Activated naive CD4-positive, alpha-beta T cell treated with anti-CD3 and anti-CD28 coated beads for 36 hours (primary cell): ENCODE measurements at regions of chr2 and their contacts with region 1.

Region 1: GRCh38 chr2:108621087-108621559 is 86.9 kb downstream of the LIMS1 start:
- DNase-seq: peak; percentile 86
- H3K4me3 Mint-ChIP-seq: peak overlapping the region; percentile 84
- H3K27ac Mint-ChIP-seq: peak overlapping the region; percentile 92
- H3K4me1 Mint-ChIP-seq: peaks cover 80% of the 10 kb centered on the region
- H3K27me3 Mint-ChIP-seq: no peaks in the 10 kb centered on the region

Region 2: DNA sequence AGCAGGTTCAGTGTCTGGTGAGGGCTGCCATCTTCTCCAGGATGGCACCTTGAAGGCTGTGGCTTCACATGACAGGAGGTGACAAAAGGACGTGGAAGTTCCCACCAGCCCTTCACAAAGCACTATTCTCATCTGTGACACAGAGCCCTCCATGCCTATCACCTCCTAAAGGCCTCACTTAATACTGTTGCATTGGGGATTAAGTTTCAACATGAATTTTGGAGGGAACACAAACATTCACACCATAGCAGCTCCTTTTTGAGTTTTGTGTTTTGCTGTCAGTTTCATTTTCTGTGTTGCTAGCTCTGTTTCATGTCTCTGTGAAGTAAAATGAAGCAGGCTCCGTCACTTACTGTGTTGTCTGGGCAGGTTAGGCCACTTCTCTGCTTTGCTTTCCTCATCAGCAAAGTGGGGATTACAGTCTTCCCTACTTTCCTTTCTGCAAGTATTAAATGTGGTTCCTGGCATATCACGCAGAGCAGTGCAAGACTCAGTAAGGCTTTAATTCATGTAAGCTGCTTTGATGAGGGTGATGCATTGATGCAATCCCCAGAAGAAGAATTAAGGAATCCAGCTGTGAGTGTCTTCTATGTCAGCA is 55.2 kb before region 1 on chr2:
- CTCF ChIA-PET with region 1: no interaction called
- intact Hi-C with region 1: no loop called
- DNase-seq: peak; percentile 52
- H3K4me3 Mint-ChIP-seq: peak overlapping the region; percentile 5
- H3K27ac Mint-ChIP-seq: peak overlapping the region; percentile 15
- H3K4me1 Mint-ChIP-seq: peaks cover 8% of the 10 kb centered on the region
- H3K27me3 Mint-ChIP-seq: no peaks in the 10 kb centered on the region

Region 3: GRCh38 chr2:108594132-108594981 is 26.8 kb before region 1 on chr2:
- CTCF ChIA-PET with region 1: interaction called, 4 read pairs
- intact Hi-C with region 1: loop called (anchors 1 kb)
- DNase-seq: peak; percentile 30
- H3K4me3 Mint-ChIP-seq: peak overlapping the region; percentile 17
- H3K27ac Mint-ChIP-seq: no peak overlapping the region
- H3K4me1 Mint-ChIP-seq: peaks cover 49% of the 10 kb centered on the region
- H3K27me3 Mint-ChIP-seq: no peaks in the 10 kb centered on the region

Region 4: DNA sequence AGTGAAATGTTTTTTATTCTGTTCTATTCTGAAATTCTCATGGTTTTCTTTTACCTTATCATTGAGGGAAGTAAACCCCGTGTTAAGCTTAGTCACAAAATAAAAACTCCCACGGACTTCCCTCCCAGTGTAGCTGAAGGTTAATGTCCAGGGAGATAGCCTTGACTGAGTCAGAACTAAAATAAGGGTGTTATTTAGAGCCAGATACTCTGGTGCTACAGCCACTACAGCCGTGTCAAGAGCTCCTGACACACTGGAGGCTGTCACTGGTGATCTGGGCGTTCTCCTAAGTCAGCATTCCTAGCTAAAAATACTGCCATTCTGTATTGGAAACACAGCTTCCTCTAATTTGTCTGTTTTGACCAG is 16.2 kb after region 1 on chr2:
- CTCF ChIA-PET with region 1: interaction called, 147 read pairs
- intact Hi-C with region 1: no loop called
- DNase-seq: no peak
- H3K4me3 Mint-ChIP-seq: no peak overlapping the region
- H3K27ac Mint-ChIP-seq: no peak overlapping the region
- H3K4me1 Mint-ChIP-seq: peaks cover 54% of the 10 kb centered on the region
- H3K27me3 Mint-ChIP-seq: no peaks in the 10 kb centered on the region

Region 5: GRCh38 chr2:108786354-108787199 is 165.5 kb after region 1 on chr2 and contains the start of gene CCDC138:
- CTCF ChIA-PET with region 1: no interaction called
- intact Hi-C with region 1: loop called (anchors 5 kb)
- DNase-seq: peak; percentile 92
- H3K4me3 Mint-ChIP-seq: peak within 1 kb of the TSS; percentile 97
- H3K27ac Mint-ChIP-seq: peak within 1 kb of the TSS; percentile 87
- H3K4me1 Mint-ChIP-seq: peaks cover 14% of the 10 kb centered on the region
- H3K27me3 Mint-ChIP-seq: no peaks in the 10 kb centered on the region
- total RNA-seq, gene CCDC138: 7.4 to 9.5 TPM

Region 6: GRCh38 chr2:108971661-108972566 is 350.8 kb after region 1 on chr2:
- CTCF ChIA-PET with region 1: no interaction called
- intact Hi-C with region 1: no loop called
- DNase-seq: no peak
- H3K4me3 Mint-ChIP-seq: no peak overlapping the region
- H3K27ac Mint-ChIP-seq: no peak overlapping the region
- H3K4me1 Mint-ChIP-seq: peaks cover 85% of the 10 kb centered on the region
- H3K27me3 Mint-ChIP-seq: no peaks in the 10 kb centered on the region